AG04449 (cell line): ENCODE measurements at regions of chr1 and their contacts with region 1.

Region 1: DNA sequence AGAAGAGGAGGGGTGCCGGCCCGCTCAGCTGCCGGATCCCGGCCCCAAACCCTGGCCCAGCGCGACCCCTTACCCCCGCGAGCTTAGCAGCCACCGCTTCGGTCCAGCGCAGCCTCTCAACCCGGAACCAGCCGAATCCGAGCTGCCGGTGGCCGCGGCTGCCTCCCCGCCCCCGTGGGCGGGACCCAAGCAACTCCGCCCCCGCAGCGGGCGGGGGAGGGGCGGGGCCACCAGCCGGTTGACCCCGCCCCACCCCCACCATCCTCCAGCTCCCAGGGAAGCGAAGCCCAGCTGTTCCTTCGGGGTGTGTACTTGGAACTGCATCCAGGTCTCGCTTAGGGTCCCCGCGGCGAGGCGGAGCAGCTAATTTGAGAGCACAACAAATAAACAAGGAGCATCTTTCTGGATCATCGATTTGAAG is at the start of gene TRIM62:
- DNase-seq: no peak
- H3K4me3 ChIP-seq: peak within 1 kb of the TSS; percentile 86
- CTCF ChIP-seq: no peak

Region 2: DNA sequence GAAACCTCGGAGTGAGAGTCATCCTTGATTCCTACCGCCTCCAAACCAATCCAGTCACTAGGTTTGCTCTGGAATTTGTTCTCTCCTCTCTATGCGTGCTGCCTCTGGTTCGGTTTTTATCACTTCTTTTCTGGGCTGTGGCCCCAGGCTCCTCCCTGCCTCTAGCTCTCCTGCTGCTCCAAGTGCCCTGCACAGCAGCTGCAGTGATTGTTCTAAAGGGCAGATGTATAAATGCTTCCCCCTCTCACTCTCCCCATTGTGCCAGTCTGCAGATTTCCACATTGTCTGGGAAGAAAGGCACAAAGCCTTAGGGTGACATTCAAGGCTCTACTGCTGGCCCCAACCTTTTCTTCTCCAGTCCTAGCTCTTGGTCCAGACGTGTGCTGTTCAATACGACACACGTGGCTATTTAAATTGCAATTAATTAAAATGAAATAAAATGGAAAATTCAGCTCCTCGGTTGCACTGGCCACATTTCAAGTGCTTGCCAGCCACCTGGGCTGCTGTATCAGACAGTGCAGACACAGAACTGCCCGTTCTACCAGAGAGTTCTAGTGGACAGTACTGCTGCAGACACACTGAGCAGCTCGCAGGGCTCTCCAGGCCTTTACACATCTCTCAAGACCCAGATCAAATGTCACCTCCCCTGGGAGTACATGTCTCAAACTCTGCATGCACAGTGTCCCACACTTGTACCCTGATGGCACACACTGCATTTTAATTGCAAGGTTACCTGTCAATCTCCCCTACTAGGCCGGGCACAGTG is 12.5 kb before region 1 on chr1:
- CTCF ChIA-PET with region 1: interaction called, 12 read pairs
- POLR2A ChIA-PET with region 1: no interaction called
- DNase-seq: no peak
- H3K4me3 ChIP-seq: no peak overlapping the region
- CTCF ChIP-seq: no peak

Region 3: GRCh38 chr1:33286451-33287185 is 104.7 kb after region 1 on chr1:
- CTCF ChIA-PET with region 1: no interaction called
- POLR2A ChIA-PET with region 1: no interaction called
- DNase-seq: no peak
- H3K4me3 ChIP-seq: no peak overlapping the region
- CTCF ChIP-seq: no peak